MCF 10A (cell line): ENCODE measurements at regions of chr21 and their contacts with region 1.

Region 1: GRCh38 chr21:38805328-38806152 is at the start of gene ETS2:
- DNase-seq: peak; percentile 97
- H3K4me3 Mint-ChIP-seq: peak within 1 kb of the TSS; percentile 97
- H3K27ac Mint-ChIP-seq: peak within 1 kb of the TSS; percentile 98
- H3K4me1 Mint-ChIP-seq: peaks cover 30% of the 10 kb centered on the region
- H3K27me3 Mint-ChIP-seq: no peaks in the 10 kb centered on the region
- CTCF ChIP-seq: no peak
- total RNA-seq, gene ETS2: 109 and 126 TPM in 2 replicates

Region 2: DNA sequence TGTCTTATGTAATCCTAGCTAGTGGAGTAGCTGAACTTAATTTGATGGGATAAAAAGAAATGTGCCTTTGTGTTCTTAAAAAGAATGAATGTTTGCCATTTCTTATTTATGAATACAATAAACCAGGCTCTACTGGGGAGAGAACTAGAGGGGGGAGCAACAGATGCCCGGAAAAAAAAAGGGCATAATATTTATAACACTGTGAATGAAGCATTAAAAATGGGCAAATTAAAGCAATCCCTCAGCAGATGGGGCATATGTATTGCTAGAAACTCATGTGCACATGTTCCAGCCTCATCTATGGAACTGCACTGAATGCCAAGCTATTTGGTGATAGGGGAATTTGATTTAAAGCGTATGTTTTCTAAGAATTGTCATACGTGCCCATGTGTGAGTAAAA is 847.0 kb before region 1 on chr21:
- CTCF ChIA-PET with region 1: no interaction called
- POLR2A ChIA-PET with region 1: no interaction called
- intact Hi-C with region 1: no loop called
- DNase-seq: no peak
- H3K4me3 Mint-ChIP-seq: no peak overlapping the region
- H3K27ac Mint-ChIP-seq: no peak overlapping the region
- H3K4me1 Mint-ChIP-seq: no peaks in the 10 kb centered on the region
- H3K27me3 Mint-ChIP-seq: peaks cover 32% of the 10 kb centered on the region
- CTCF ChIP-seq: no peak

Region 3: GRCh38 chr21:38733973-38734546 is 71.5 kb before region 1 on chr21:
- CTCF ChIA-PET with region 1: interaction called, 4 read pairs
- POLR2A ChIA-PET with region 1: interaction called, 7 read pairs
- intact Hi-C with region 1: loop called (anchors 1 kb)
- DNase-seq: peak; percentile 75
- H3K4me3 Mint-ChIP-seq: no peak overlapping the region
- H3K27ac Mint-ChIP-seq: no peak overlapping the region
- H3K4me1 Mint-ChIP-seq: peaks cover 4% of the 10 kb centered on the region
- H3K27me3 Mint-ChIP-seq: no peaks in the 10 kb centered on the region
- CTCF ChIP-seq: peak; percentile 91

Region 4: GRCh38 chr21:38773099-38774061 is 32.2 kb before region 1 on chr21:
- CTCF ChIA-PET with region 1: interaction called, 5 read pairs
- POLR2A ChIA-PET with region 1: interaction called, 110 read pairs
- intact Hi-C with region 1: loop called (anchors 2 kb)
- DNase-seq: peak; percentile 92
- H3K4me3 Mint-ChIP-seq: peak overlapping the region; percentile 56
- H3K27ac Mint-ChIP-seq: peak overlapping the region; percentile 95
- H3K4me1 Mint-ChIP-seq: peaks cover 39% of the 10 kb centered on the region
- H3K27me3 Mint-ChIP-seq: no peaks in the 10 kb centered on the region
- CTCF ChIP-seq: no peak

Region 5: DNA sequence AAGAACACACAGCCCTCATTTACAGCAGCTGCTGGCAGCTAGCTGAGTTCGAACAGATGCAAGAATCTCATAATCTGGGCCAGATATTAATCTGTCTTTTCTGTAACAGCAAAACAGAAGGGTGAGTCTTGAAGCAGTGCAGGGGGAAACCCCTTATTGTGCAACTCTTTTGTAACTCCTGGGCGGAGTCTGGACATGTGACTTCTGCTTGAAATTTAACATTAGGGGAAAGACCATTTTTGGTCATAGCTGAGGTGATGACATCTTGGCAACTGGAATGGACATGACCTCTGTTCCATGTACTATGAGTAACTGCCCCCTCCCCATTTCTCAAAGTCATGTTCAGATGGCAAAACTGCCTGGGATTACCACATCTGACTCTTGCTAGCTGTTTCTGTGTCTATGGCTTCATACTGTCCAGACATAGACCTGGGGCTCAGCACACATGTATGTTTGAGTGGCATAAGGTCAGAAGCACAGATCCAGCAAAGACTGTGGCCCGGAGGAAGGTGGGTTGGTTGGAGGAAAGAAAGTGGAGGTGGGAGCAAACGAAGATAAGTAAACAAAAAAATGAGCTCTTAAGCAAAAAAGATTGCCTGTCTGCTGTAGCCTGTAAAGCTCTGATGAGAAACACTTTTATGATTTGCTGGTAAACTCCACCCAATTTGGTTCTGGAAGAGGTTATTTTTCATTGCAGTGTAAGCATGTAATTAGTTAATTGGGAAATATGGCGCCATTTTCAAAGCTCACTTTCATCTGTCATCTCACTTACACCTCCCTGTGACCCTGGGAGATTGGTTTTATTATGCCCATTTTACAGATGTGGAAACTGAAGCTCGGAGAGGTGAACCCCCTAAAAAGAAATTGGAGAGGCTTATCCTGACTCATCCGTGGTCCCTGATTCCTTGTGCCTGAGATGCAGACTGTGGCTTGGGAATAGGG is 26.3 kb after region 1 on chr21:
- CTCF ChIA-PET with region 1: interaction called, 5 read pairs
- POLR2A ChIA-PET with region 1: interaction called, 54 read pairs
- intact Hi-C with region 1: loop called (anchors 2 kb)
- DNase-seq: peak; percentile 99
- H3K4me3 Mint-ChIP-seq: peak overlapping the region; percentile 7
- H3K27ac Mint-ChIP-seq: peak overlapping the region; percentile 90
- H3K4me1 Mint-ChIP-seq: peaks cover 24% of the 10 kb centered on the region
- H3K27me3 Mint-ChIP-seq: no peaks in the 10 kb centered on the region
- CTCF ChIP-seq: no peak

Region 6: DNA sequence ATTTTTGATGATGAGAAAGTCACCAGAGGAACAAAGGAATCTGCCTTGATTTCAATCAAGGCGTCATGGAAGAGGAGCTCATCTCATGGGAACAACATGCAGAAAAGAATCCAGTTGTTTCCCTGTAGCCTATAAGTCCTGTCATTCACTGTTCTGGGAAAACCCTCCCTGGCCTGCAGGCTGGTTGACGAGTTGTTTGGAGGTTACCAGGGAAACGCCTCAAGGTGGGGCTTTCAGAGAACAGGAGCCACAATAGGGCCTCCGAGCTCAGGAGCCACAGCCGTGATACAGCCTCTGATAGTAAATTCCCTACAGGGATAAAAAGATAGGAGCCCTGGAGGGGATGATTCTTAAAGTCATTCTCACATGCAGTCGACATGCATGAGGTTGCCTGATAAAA is 242.5 kb after region 1 on chr21:
- CTCF ChIA-PET with region 1: no interaction called
- POLR2A ChIA-PET with region 1: interaction called, 9 read pairs
- intact Hi-C with region 1: loop called (anchors 1 kb)
- DNase-seq: peak; percentile 94
- H3K4me3 Mint-ChIP-seq: peak overlapping the region; percentile 44
- H3K27ac Mint-ChIP-seq: peak overlapping the region; percentile 99
- H3K4me1 Mint-ChIP-seq: peaks cover 38% of the 10 kb centered on the region
- H3K27me3 Mint-ChIP-seq: no peaks in the 10 kb centered on the region
- CTCF ChIP-seq: no peak